ENCODE measurements at regions of chr2 and their contacts with region 1.

Region 1: DNA sequence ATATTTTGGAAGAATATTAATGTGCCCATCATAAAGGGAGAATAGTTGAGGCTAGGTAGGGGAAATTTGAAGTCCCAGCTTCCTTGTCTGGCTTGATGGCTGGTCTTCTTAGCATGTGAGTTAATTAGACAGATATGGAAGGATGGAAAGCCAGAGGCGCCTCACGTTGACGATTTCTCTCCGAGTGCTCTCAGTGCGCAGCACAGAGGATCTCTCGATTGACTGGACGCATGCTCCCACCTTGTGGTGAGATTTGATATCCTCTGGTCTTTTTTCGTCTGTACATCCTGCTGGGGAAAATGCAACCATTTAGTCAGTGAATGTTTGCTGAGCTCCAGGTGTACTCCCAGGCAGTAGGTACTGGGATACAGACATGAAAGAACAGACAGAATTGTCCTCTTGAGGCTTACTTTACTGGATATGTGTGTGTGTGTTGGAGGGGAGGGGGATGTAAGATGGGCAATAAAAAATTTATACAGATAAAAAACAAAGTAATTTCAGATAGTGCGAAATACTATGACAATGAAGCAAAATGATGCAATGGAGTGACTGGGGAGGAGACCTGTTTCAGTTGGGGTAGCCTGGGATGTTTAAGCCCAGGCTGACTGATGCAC is 66.9 kb upstream of the ZNG1B start:
- DNase-seq: peak; percentile 47
- H3K4me3 Mint-ChIP-seq: no peak overlapping the region
- H3K27ac Mint-ChIP-seq: no peak overlapping the region
- H3K4me1 Mint-ChIP-seq: peaks cover 8% of the 10 kb centered on the region
- H3K27me3 Mint-ChIP-seq: peaks cover 8% of the 10 kb centered on the region

Region 2: GRCh38 chr2:113291191-113291590 is 79.4 kb before region 1 on chr2:
- intact Hi-C with region 1: loop called (anchors 1 kb)
- DNase-seq: no peak
- H3K4me3 Mint-ChIP-seq: no peak overlapping the region
- H3K27ac Mint-ChIP-seq: no peak overlapping the region
- H3K4me1 Mint-ChIP-seq: no peaks in the 10 kb centered on the region
- H3K27me3 Mint-ChIP-seq: peaks cover 42% of the 10 kb centered on the region

Region 3: GRCh38 chr2:113390124-113390849 is 19.7 kb after region 1 on chr2:
- intact Hi-C with region 1: no loop called
- DNase-seq: peak; percentile 48
- H3K4me3 Mint-ChIP-seq: peak overlapping the region; percentile 53
- H3K27ac Mint-ChIP-seq: peak overlapping the region; percentile 65
- H3K4me1 Mint-ChIP-seq: peaks cover 16% of the 10 kb centered on the region
- H3K27me3 Mint-ChIP-seq: peaks cover 29% of the 10 kb centered on the region

Measured in activated T-helper 1 cell treated with anti-CD3 and anti-CD28 coated beads, Interleukin-12 subunit alpha, Interleukin-12 subunit beta, Interleukin-2, Interleukin-4 antibody, amounts not matched to agents 30 ng/mL and 10 ng/mL and 1 ng/mL, durations not matched to agents 14 hours and 24 hours and 36 hours (primary cell).